ENCODE measurements at regions of chr3 and their contacts with region 1.

Region 1: GRCh38 chr3:12891985-12892839 is 50.8 kb upstream of the RPL32 start:
- DNase-seq: peak; percentile 39
- ATAC-seq: peak; percentile 66
- H3K4me3 ChIP-seq: peak overlapping the region in 1 of 2 experiments; percentile 16; a peak in 2 of 4 replicates
- H3K27ac ChIP-seq: no peak overlapping the region
- H3K4me1 ChIP-seq: peaks cover 0 to 5% of the 10 kb centered on the region in 2 experiments; a peak in 2 of 4 replicates
- H3K27me3 ChIP-seq: peaks cover 15% of the 10 kb centered on the region
- CTCF ChIP-seq: peak; percentile 81 to 94 (median 90)
- POLR2A ChIP-seq: no peak
- RAD21 ChIP-seq: peak; percentile 98

Region 2: GRCh38 chr3:11846281-11847034 is 1045.8 kb before region 1 on chr3 and contains the start of gene TAMM41:
- CTCF ChIA-PET with region 1: no interaction called
- POLR2A ChIA-PET with region 1: no interaction called
- RAD21 ChIA-PET with region 1: no interaction called
- intact Hi-C with region 1: loop called (anchors 5 kb)
- DNase-seq: peak; percentile 81
- ATAC-seq: peak; percentile 98
- H3K4me3 ChIP-seq: peak within 1 kb of the TSS; percentile 94 to 99
- H3K27ac ChIP-seq: peak within 1 kb of the TSS; percentile 59
- H3K4me1 ChIP-seq: peaks cover 11 to 16% of the 10 kb centered on the region in 2 experiments; a peak in 3 of 4 replicates
- H3K27me3 ChIP-seq: no peaks in the 10 kb centered on the region
- CTCF ChIP-seq: peak; percentile 64 to 66 (median 66)
- POLR2A ChIP-seq: peak; percentile 85
- RAD21 ChIP-seq: 0 out of 2 replicates have a peak, but pooled peaks have one; percentile 18
- total RNA-seq, gene TAMM41: 17.9 TPM

Region 3: GRCh38 chr3:12135029-12135657 is 757.1 kb before region 1 on chr3:
- CTCF ChIA-PET with region 1: interaction called, 5 read pairs
- POLR2A ChIA-PET with region 1: no interaction called
- RAD21 ChIA-PET with region 1: no interaction called
- intact Hi-C with region 1: loop called (anchors 5 kb)
- DNase-seq: peak; percentile 34
- ATAC-seq: peak; percentile 96
- H3K4me3 ChIP-seq: no peak overlapping the region
- H3K27ac ChIP-seq: no peak overlapping the region
- H3K4me1 ChIP-seq: no peaks in the 10 kb centered on the region
- H3K27me3 ChIP-seq: no peaks in the 10 kb centered on the region
- CTCF ChIP-seq: peak; percentile 84 to 94 (median 90)
- POLR2A ChIP-seq: no peak
- RAD21 ChIP-seq: peak; percentile 96

Region 4: DNA sequence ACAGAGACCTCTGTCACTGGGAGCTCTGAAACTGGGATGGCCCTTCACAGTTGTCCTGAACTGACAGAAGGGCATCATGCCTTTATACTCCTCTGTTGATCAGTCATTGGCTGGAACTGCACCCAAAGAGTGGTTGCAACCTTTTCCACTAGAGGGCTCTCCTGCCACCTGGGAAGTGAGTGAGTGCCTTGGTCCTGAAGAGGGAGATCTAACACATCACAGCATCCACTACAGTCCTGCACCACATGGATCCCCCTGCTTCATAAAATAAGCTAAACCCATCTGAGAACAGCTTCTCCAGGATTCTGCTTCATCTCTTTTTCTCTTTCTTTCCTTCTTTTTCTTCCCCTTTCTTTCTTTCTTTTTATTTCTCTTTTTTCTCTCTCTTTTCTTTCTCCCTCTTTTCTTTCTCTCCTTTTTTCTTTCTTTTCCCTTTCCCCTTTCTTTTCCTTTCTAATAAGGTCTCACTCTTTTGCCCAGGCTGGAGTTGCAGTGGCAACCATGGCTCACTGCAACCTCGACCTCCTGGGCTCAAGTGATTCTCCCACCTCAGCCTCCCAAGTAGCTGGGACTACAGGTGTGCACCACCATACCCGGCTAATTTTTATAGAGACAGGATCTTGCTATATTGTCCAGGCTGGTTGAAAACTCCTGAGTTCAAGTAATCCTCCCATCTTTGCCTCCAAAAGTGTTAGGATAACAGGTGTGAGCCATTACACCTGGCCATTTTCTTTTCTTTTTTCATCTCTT is 185.5 kb before region 1 on chr3:
- CTCF ChIA-PET with region 1: interaction called, 4 read pairs
- POLR2A ChIA-PET with region 1: no interaction called
- RAD21 ChIA-PET with region 1: no interaction called
- intact Hi-C with region 1: loop called (anchors 2 kb)
- DNase-seq: peak; percentile 78
- ATAC-seq: peak; percentile 99
- H3K4me3 ChIP-seq: no peak overlapping the region
- H3K27ac ChIP-seq: no peak overlapping the region
- H3K4me1 ChIP-seq: peaks cover 0 to 10% of the 10 kb centered on the region in 2 experiments; a peak in 3 of 4 replicates
- H3K27me3 ChIP-seq: no peaks in the 10 kb centered on the region
- CTCF ChIP-seq: peak; percentile 91 to 99 (median 94)
- POLR2A ChIP-seq: no peak
- RAD21 ChIP-seq: peak; percentile 93

Region 5: DNA sequence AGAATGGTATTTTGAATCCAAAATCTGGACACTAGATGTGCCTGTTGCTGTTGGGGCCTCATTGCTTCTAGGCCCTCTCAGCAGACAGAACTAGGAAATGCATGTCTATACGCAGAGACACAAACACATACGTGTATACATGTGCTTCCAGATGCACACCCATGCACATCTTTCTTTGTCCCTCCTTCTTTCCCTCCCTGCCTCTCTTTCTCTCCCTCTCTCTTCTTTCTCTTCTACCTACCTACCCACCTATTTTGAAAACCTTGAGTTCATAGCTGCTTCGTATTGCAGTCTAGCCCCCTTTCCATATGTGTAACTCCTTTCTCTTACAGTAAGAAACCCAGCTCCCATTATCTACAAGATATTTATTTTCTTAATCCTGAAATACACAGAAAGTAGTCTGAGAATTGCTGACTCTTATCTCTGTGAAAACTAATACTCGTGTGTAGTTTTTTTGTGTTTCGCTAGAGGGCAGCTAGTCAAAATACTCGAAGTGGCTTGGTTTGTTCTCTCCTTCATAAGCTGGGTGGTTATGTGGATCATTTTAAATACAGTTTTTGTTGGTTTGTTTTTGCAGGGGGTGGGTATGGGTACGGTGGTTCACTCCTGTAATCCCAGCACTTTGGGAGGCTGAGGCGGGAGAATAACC is 69.4 kb before region 1 on chr3:
- CTCF ChIA-PET with region 1: interaction called, 3 read pairs
- POLR2A ChIA-PET with region 1: no interaction called
- RAD21 ChIA-PET with region 1: no interaction called
- intact Hi-C with region 1: loop called (anchors 5 kb)
- DNase-seq: peak; percentile 29
- ATAC-seq: peak; percentile 84
- H3K4me3 ChIP-seq: no peak overlapping the region
- H3K27ac ChIP-seq: no peak overlapping the region
- H3K4me1 ChIP-seq: no peaks in the 10 kb centered on the region
- H3K27me3 ChIP-seq: no peaks in the 10 kb centered on the region
- CTCF ChIP-seq: peak; percentile 40 to 56 (median 48); a peak in 5 of 6 replicates
- POLR2A ChIP-seq: no peak
- RAD21 ChIP-seq: peak; percentile 47; the same call in 1 of the 2 replicates

Region 6: DNA sequence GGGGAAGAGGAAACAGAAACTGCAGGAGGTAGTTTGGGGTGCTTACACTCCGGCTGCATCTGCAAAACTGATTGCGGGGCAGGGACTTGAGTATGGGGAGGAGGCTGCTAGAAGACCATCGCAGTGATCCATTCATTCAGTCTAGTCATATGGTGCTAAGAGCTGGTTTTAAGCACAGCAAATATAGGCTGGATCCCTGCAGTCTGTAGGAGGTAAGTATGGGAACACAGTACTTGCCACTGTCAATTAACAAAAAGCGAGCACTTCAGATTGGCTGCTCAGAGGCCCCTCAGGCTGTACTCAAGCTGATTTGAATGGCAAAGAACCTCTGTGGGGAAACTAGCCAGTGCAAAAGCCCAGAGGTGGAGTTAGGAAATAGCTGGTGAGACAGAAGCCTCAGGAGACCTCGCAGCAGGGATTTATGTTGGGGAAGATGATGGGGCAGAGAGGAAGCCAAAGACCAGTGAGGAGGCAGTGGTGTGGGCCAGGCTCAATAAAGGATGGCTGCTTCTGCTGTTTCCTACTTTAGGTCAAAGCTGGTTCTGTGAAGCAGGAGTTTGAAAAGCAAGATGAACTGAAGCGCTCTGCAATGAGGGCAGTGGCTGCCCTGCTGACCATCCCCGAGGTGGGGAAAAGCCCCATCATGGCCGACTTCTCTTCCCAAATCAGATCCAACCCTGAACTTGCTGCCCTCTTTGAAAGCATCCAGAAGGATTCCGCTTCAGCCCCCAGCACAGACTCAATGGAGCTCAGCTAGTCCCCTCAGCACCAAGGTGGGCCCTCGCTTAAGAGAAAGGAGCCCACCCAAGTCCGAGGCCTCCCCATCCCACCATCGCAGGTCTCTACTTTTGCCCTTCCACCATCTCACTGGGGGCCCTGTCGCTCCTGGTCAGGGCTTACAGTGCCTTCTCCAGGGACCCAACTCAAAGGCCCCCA is 58.7 kb before region 1 on chr3:
- CTCF ChIA-PET with region 1: no interaction called
- POLR2A ChIA-PET with region 1: no interaction called
- RAD21 ChIA-PET with region 1: no interaction called
- intact Hi-C with region 1: no loop called
- DNase-seq: no peak
- ATAC-seq: peak; percentile 6; the same call in 1 of the 2 replicates
- H3K4me3 ChIP-seq: no peak overlapping the region
- H3K27ac ChIP-seq: no peak overlapping the region
- H3K4me1 ChIP-seq: peaks cover 0 to 20% of the 10 kb centered on the region in 2 experiments; a peak in 1 of 4 replicates
- H3K27me3 ChIP-seq: no peaks in the 10 kb centered on the region
- CTCF ChIP-seq: no peak
- POLR2A ChIP-seq: no peak
- RAD21 ChIP-seq: no peak

Region 7: DNA sequence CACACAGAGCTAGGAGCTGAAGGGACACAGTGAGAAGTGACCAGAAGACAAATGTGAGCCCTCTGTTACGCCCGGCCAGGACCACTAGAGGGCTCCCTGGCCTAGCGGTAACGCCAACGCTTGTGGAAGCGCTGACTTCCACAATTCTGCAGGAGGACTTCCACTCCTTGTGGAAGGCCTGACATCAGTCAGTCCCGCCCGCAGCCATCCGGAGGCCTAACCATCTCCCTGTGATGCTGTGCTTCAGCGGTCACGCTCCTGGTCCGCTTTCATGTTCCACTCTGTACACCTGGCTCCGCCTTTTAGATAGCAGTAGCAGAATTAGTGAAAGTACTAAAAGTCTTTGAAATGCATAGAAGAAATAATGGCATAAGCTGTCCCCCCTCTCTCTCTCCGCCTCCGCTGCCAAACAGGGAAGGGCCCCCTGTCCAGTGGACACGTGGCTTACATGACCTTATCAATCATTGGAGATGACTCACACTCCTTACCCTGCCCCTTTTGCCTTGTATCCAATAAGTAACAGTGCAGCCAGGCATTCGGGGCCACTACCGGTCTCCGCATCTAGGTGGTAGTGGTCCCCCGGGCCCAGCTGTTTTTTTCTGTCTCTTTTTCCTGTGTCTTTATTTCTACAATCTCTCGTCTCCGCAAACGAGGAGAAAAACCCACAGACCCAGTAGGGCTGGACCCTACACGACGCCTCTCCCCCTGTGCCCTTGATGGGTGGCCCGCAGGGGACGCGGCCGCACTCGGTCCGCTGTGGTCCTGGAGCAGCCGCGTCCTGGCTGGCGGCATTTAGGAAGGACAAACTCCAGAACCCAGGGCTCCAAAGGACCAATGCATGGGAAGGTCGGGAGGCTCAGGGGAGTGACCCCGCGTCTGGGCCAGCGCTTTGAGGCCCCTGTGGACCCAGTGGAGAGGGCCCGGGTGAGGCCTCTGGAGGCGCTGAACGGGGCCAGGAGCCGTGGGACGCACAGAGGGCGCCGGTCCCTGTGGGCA is 23.9 kb before region 1 on chr3:
- CTCF ChIA-PET with region 1: interaction called, 12 read pairs
- POLR2A ChIA-PET with region 1: no interaction called
- RAD21 ChIA-PET with region 1: no interaction called
- intact Hi-C with region 1: loop called (anchors 1 kb)
- DNase-seq: peak; percentile 75
- ATAC-seq: peak; percentile 90
- H3K4me3 ChIP-seq: no peak overlapping the region
- H3K27ac ChIP-seq: no peak overlapping the region; the same call in 1 of the 2 replicates
- H3K4me1 ChIP-seq: peaks cover 10% of the 10 kb centered on the region in 2 experiments; a peak in 3 of 4 replicates
- H3K27me3 ChIP-seq: no peaks in the 10 kb centered on the region
- CTCF ChIP-seq: peak; percentile 83 to 90 (median 87)
- POLR2A ChIP-seq: no peak
- RAD21 ChIP-seq: peak; percentile 94